Activated CD4-positive, alpha-beta memory T cell treated with anti-CD3 and anti-CD28 coated beads for 36 hours (primary cell): ENCODE measurements at regions of chr4 and their contacts with region 1.

Region 1: GRCh38 chr4:75916091-75916661 is 13.9 kb upstream of the PPEF2 start:
- DNase-seq: peak; percentile 37
- H3K4me3 Mint-ChIP-seq: no peak overlapping the region
- H3K27ac Mint-ChIP-seq: no peak overlapping the region
- H3K4me1 Mint-ChIP-seq: no peaks in the 10 kb centered on the region
- H3K27me3 Mint-ChIP-seq: no peaks in the 10 kb centered on the region

Region 2: DNA sequence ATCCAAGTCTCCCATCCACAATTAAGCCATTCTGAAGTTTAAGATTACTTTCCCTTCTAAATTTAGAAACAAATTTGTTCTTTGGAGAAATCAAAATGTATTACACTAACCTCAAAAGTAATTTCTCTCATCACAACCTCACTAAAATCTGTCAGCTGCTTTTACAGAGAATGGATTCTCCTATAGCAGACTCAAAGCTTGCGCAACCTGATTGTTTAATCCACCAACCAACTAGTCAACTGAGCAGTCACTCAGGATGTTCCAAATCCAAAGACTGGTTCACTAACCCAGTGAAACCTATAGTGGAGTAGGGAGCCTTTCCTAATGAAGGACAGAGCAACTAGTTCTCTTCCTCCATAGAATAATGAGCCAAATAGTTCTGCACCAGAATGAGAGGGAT is 446.3 kb before region 1 on chr4:
- CTCF ChIA-PET with region 1: no interaction called
- POLR2A ChIA-PET with region 1: no interaction called
- intact Hi-C with region 1: no loop called
- DNase-seq: no peak
- H3K4me3 Mint-ChIP-seq: no peak overlapping the region
- H3K27ac Mint-ChIP-seq: no peak overlapping the region
- H3K4me1 Mint-ChIP-seq: no peaks in the 10 kb centered on the region
- H3K27me3 Mint-ChIP-seq: no peaks in the 10 kb centered on the region

Region 3: DNA sequence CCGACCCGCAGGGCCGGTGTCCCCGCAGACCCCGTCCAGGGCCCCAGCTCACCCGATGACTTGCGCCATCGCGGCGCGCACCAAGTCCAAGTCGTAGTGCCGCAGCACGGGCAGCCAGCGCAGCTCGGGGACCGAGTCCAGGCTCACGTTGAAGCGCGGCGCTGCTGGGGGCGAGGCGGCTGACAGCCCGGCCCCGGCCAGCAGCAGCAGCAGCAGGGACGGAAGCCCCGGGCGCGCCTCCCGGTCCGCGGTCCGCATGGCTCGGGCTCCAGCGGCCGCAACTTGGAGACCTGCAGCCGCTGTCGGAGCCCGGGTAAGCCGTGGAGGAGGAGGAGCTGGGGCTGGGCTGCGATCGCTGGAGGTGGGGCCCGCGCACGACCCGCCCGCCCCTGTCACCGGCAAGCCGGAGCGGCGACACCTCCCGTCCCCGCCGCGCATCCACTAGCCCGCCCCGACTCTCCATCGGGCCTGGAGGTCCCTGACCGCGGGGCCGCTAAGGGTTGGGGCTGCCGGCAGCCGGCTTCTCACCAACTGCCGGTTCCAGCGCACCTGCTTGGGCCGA is 24.6 kb after region 1 on chr4 and contains the start of gene NAAA:
- CTCF ChIA-PET with region 1: interaction called, 28 read pairs
- POLR2A ChIA-PET with region 1: interaction called, 4 read pairs
- intact Hi-C with region 1: loop called (anchors 1 kb)
- DNase-seq: peak; percentile 91
- H3K4me3 Mint-ChIP-seq: peak within 1 kb of the TSS; percentile 96
- H3K27ac Mint-ChIP-seq: peak within 1 kb of the TSS; percentile 93
- H3K4me1 Mint-ChIP-seq: peaks cover 20% of the 10 kb centered on the region
- H3K27me3 Mint-ChIP-seq: no peaks in the 10 kb centered on the region
- total RNA-seq, gene NAAA: 31.7 to 32.2 TPM

Region 4: DNA sequence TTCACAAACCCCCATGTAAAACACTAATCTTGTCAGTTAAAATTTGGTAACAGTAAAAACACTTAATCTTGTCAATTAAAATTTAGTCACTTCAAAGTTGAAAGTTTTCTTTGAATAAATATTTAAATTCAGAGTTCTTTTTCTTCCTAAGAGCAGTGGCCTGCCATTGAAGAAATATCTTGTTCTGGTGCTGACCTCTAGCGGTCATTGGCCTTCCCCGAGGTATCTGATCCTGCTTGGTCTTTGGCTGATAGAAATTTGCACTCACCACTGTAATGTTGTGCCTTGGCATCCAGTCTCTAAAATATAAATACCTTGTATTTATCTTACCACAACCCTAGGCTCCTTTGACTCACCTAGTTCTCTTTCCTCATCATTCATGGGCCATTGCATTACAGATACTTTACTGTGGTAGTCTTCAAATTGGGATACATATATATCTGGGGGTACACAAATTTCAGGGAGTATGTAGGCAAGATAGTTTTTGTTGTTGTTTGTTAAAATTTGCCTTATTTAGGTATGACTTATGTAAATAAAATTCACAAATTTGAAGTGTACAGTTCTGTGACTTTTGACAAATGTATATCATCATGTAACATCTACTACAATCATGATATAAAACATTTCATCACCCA is 151.6 kb after region 1 on chr4:
- CTCF ChIA-PET with region 1: interaction called, 5 read pairs
- POLR2A ChIA-PET with region 1: no interaction called
- intact Hi-C with region 1: loop called (anchors 1 kb)
- DNase-seq: peak; percentile 79
- H3K4me3 Mint-ChIP-seq: no peak overlapping the region
- H3K27ac Mint-ChIP-seq: no peak overlapping the region
- H3K4me1 Mint-ChIP-seq: no peaks in the 10 kb centered on the region
- H3K27me3 Mint-ChIP-seq: no peaks in the 10 kb centered on the region

Region 5: DNA sequence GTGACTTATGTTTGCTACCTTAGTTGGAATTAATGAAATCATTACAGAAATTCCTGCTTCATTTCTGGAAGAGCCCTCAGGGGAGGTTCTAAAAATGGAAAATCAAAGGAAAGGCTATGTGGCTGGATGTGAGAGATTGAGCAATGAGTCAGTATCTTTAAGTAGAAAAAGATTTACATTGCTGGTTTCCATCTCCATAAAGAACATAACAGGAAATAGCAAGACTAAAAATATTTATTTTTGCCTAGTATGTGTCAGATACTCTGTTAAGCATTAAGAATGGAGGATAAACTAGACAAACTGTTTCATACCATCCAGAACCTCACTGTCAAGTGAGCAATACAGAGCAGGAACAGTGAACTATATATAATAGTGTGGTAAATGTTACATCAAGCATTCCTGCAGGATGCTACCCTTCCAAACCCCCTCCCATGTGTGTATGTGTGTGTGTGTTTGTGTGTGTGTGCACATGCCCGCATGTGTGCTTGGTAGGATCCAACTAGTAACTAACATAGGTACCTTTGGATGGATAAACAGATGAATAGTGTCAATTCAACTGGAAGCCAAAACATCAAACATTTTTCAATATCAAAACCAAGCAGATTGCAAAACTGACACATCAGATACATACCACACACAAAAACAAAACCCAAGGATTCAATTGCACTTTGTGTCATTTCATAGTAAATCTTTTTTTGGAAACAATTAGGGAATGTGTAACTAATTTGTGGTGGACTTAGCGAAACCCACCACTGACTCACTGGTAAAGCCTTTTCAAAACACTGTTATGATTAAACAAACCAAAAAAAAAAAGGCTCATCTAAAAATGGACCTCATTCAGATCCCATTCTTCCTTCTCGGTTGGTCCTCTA is 742.3 kb after region 1 on chr4:
- CTCF ChIA-PET with region 1: no interaction called
- POLR2A ChIA-PET with region 1: no interaction called
- intact Hi-C with region 1: no loop called
- DNase-seq: no peak
- H3K4me3 Mint-ChIP-seq: no peak overlapping the region
- H3K27ac Mint-ChIP-seq: no peak overlapping the region
- H3K4me1 Mint-ChIP-seq: peaks cover 4% of the 10 kb centered on the region
- H3K27me3 Mint-ChIP-seq: peaks cover 11% of the 10 kb centered on the region